Posterior vena cava (tissue), 2 donors: ENCODE measurements at regions of chr18 and their contacts with region 1.

Region 1: DNA sequence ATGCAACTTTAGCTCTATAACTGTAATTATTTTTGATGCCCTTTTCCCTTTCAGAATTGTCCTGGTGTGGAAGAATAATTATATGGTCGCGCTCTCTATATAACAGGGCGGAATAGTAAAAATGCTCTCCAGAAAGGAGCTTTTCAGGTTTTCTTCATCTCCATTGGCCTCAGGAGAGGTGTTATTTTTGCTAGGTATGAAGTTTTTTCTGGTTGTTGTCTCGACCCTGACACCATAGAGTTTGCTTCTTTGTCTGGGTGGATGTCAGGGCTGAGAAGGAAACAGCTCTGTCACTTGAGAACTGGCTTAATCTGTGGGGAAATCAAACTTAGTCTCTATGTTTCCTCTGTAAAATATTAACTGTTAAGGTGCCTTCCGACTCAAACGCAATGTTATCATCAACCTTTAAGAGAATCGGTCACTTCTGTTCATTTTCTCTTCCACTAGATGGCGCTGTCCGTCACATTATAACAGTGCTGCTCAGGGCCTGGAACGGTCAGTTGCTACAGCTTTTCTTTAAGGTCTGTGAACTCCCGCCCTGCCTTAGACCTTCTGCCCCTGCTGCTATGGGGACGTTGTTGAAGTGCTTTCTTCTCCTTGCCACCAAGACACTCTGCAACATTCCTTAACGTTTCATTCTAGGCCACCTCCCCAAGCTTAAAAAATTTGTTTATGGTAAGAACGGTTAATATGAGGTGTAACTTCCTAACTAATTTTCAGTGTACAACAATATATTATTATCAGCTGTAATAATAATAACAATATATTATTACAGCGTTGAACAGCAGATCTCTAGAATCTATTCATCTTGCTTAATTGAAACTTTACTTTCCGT is 23.8 kb upstream of the SERPINB12 start:
- DNase-seq: no peak

Region 2: GRCh38 chr18:63578357-63578958 is 60.1 kb after region 1 on chr18:
- intact Hi-C with region 1: loop called in 1 of 2 experiments (anchors 10 kb)
- DNase-seq: no peak

Region 3: GRCh38 chr18:63848159-63848558 is 329.8 kb after region 1 on chr18:
- intact Hi-C with region 1: loop called in 1 of 2 experiments (anchors 10 kb)
- DNase-seq: no peak